Panc1 (cell line): ENCODE measurements at regions of chr3 and their contacts with region 1.

Region 1: GRCh38 chr3:42839616-42840015 is 30.4 kb downstream of the ACKR2 start:
- DNase-seq: peak; percentile 58
- ATAC-seq: peak; percentile 97
- H3K4me3 ChIP-seq: peak overlapping the region in 1 of 2 experiments; percentile 30; a peak in 2 of 4 replicates
- H3K27ac ChIP-seq: no peak overlapping the region
- H3K4me1 ChIP-seq: no peaks in the 10 kb centered on the region
- H3K27me3 ChIP-seq: no peaks in the 10 kb centered on the region
- CTCF ChIP-seq: peak; percentile 77

Region 2: GRCh38 chr3:42590989-42591756 is 248.4 kb before region 1 on chr3:
- CTCF ChIA-PET with region 1: no interaction called
- POLR2A ChIA-PET with region 1: no interaction called
- in situ Hi-C with region 1: no loop called
- intact Hi-C with region 1: no loop called
- DNase-seq: no peak
- ATAC-seq: no peak; the same call in 1 of the 2 replicates
- H3K4me3 ChIP-seq: peak overlapping the region; percentile 55 to 72
- H3K27ac ChIP-seq: peak overlapping the region; percentile 61
- H3K4me1 ChIP-seq: peaks cover 10% of the 10 kb centered on the region
- H3K27me3 ChIP-seq: no peaks in the 10 kb centered on the region
- CTCF ChIP-seq: no peak

Region 3: DNA sequence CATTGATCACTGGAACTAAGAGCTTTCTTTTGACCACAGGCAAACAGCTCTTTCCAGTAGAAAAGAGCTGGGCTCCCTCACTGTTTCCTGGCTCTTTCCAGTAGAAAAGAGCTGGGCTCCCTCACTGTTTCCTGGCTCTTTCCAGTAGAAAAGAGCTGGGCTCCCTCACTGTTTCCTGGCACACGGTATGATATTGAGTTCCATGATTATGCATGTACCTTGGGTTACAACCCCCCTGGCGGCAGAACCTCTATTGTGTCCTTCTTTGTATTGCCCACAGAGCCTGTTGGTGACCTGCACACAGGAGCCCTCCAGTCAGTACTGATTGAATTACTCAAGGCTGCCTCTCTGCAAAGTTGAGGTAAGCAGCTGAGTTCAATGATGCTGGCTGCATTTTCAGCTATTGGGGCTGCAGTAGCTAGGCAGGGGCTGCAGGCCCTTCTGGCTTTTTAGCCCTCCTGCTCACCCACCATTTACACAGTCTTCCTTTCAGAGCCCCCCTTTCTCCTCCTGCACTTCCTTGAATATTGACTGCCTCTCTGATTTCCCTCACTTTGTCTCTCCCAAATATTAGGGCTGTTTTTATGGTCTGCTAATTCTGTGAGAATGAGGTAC is 20.2 kb before region 1 on chr3:
- CTCF ChIA-PET with region 1: interaction called, 10 read pairs
- POLR2A ChIA-PET with region 1: no interaction called
- in situ Hi-C with region 1: no loop called
- intact Hi-C with region 1: no loop called
- DNase-seq: no peak
- ATAC-seq: peak; percentile 62; the same call in 1 of the 2 replicates
- H3K4me3 ChIP-seq: no peak overlapping the region
- H3K27ac ChIP-seq: no peak overlapping the region
- H3K4me1 ChIP-seq: no peaks in the 10 kb centered on the region
- H3K27me3 ChIP-seq: no peaks in the 10 kb centered on the region
- CTCF ChIP-seq: 0 out of 2 replicates have a peak, but pooled peaks have one; percentile 10

Region 4: GRCh38 chr3:43079536-43080332 is 240.1 kb after region 1 on chr3:
- CTCF ChIA-PET with region 1: no interaction called
- POLR2A ChIA-PET with region 1: no interaction called
- in situ Hi-C with region 1: no loop called
- intact Hi-C with region 1: no loop called
- DNase-seq: no peak
- ATAC-seq: no peak
- H3K4me3 ChIP-seq: no peak overlapping the region
- H3K27ac ChIP-seq: no peak overlapping the region
- H3K4me1 ChIP-seq: no peaks in the 10 kb centered on the region
- H3K27me3 ChIP-seq: no peaks in the 10 kb centered on the region
- CTCF ChIP-seq: no peak